ENCODE measurements at regions of chr17 and their contacts with region 1.

Region 1: GRCh38 chr17:18033442-18034099 is 5.4 kb downstream of the ATPAF2 start:
- DNase-seq: peak; percentile 87
- ATAC-seq: peak; percentile 94
- H3K4me3 ChIP-seq: no peak overlapping the region
- H3K27ac ChIP-seq: no peak overlapping the region
- H3K4me1 ChIP-seq: peaks cover 5% of the 10 kb centered on the region
- H3K27me3 ChIP-seq: no peaks in the 10 kb centered on the region
- CTCF ChIP-seq: peak; percentile 91
- POLR2A ChIP-seq: no peak
- RAD21 ChIP-seq: peak; percentile 96

Region 2: GRCh38 chr17:17812211-17813057 is 221.1 kb before region 1 on chr17:
- CTCF ChIA-PET with region 1: no interaction called
- POLR2A ChIA-PET with region 1: no interaction called
- dilution Hi-C with region 1: no loop called
- in situ Hi-C with region 1: no loop called
- intact Hi-C with region 1: loop called (anchors 1 kb)
- DNase-seq: peak; percentile 41
- ATAC-seq: peak; percentile 67
- H3K4me3 ChIP-seq: no peak overlapping the region
- H3K27ac ChIP-seq: no peak overlapping the region
- H3K4me1 ChIP-seq: peaks cover 9% of the 10 kb centered on the region; the same call in 1 of the 2 replicates
- H3K27me3 ChIP-seq: no peaks in the 10 kb centered on the region
- CTCF ChIP-seq: peak; percentile 89
- POLR2A ChIP-seq: no peak
- RAD21 ChIP-seq: peak; percentile 77

Region 3: GRCh38 chr17:17877529-17878358 is 155.8 kb before region 1 on chr17:
- CTCF ChIA-PET with region 1: interaction called, 5 read pairs
- POLR2A ChIA-PET with region 1: no interaction called
- dilution Hi-C with region 1: no loop called
- in situ Hi-C with region 1: no loop called
- intact Hi-C with region 1: loop called (anchors 5 kb)
- DNase-seq: peak; percentile 90
- ATAC-seq: peak; percentile 84
- H3K4me3 ChIP-seq: no peak overlapping the region
- H3K27ac ChIP-seq: peak overlapping the region; percentile 38
- H3K4me1 ChIP-seq: peaks cover 22% of the 10 kb centered on the region
- H3K27me3 ChIP-seq: no peaks in the 10 kb centered on the region
- CTCF ChIP-seq: 0 out of 2 replicates have a peak, but pooled peaks have one; percentile 20
- POLR2A ChIP-seq: no peak
- RAD21 ChIP-seq: 0 out of 2 replicates have a peak, but pooled peaks have one; percentile 20

Region 4: GRCh38 chr17:17890773-17891759 is 142.5 kb before region 1 on chr17:
- CTCF ChIA-PET with region 1: interaction called, 3 read pairs
- POLR2A ChIA-PET with region 1: no interaction called
- dilution Hi-C with region 1: no loop called
- in situ Hi-C with region 1: loop called (anchors 5 kb)
- intact Hi-C with region 1: loop called (anchors 1 kb)
- DNase-seq: peak; percentile 72
- ATAC-seq: peak; percentile 95
- H3K4me3 ChIP-seq: no peak overlapping the region
- H3K27ac ChIP-seq: no peak overlapping the region
- H3K4me1 ChIP-seq: peaks cover 4% of the 10 kb centered on the region; the same call in 1 of the 2 replicates
- H3K27me3 ChIP-seq: no peaks in the 10 kb centered on the region
- CTCF ChIP-seq: peak; percentile 83
- POLR2A ChIP-seq: no peak
- RAD21 ChIP-seq: peak; percentile 94

Region 5: GRCh38 chr17:17919169-17920107 is 114.1 kb before region 1 on chr17:
- CTCF ChIA-PET with region 1: interaction called, 3 read pairs
- POLR2A ChIA-PET with region 1: no interaction called
- dilution Hi-C with region 1: no loop called
- in situ Hi-C with region 1: no loop called
- intact Hi-C with region 1: loop called (anchors 1 kb)
- DNase-seq: peak; percentile 72
- ATAC-seq: peak; percentile 65
- H3K4me3 ChIP-seq: no peak overlapping the region
- H3K27ac ChIP-seq: peak overlapping the region; percentile 25; the same call in 1 of the 2 replicates
- H3K4me1 ChIP-seq: peaks cover 27% of the 10 kb centered on the region
- H3K27me3 ChIP-seq: no peaks in the 10 kb centered on the region
- CTCF ChIP-seq: peak; percentile 85
- POLR2A ChIP-seq: no peak
- RAD21 ChIP-seq: peak; percentile 92

Region 6: GRCh38 chr17:17972126-17972951 is 61.2 kb before region 1 on chr17 and contains the starts of genes DRC3 and TOM1L2:
- CTCF ChIA-PET with region 1: interaction called, 3 read pairs
- POLR2A ChIA-PET with region 1: no interaction called
- dilution Hi-C with region 1: no loop called
- in situ Hi-C with region 1: no loop called
- intact Hi-C with region 1: loop called (anchors 5 kb)
- DNase-seq: peak; percentile 100
- ATAC-seq: peak; percentile 96
- H3K4me3 ChIP-seq: peak within 1 kb of the TSS; percentile 66
- H3K27ac ChIP-seq: peak within 1 kb of the TSS; percentile 36
- H3K4me1 ChIP-seq: peaks cover 9% of the 10 kb centered on the region
- H3K27me3 ChIP-seq: no peaks in the 10 kb centered on the region
- CTCF ChIP-seq: no peak
- POLR2A ChIP-seq: peak; percentile 82
- RAD21 ChIP-seq: peak; percentile 18; the same call in 1 of the 2 replicates
- total RNA-seq, gene DRC3: 0.28 and 0.72 TPM in 2 replicates
- total RNA-seq, gene TOM1L2: 23.3 and 34.4 TPM in 2 replicates

Region 7: GRCh38 chr17:18235743-18236256 is 202.2 kb after region 1 on chr17:
- CTCF ChIA-PET with region 1: no interaction called
- POLR2A ChIA-PET with region 1: no interaction called
- dilution Hi-C with region 1: no loop called
- in situ Hi-C with region 1: no loop called
- intact Hi-C with region 1: no loop called
- DNase-seq: peak; percentile 67
- ATAC-seq: peak; percentile 62
- H3K4me3 ChIP-seq: no peak overlapping the region
- H3K27ac ChIP-seq: peak overlapping the region; percentile 24; the same call in 1 of the 2 replicates
- H3K4me1 ChIP-seq: peaks cover 5% of the 10 kb centered on the region
- H3K27me3 ChIP-seq: no peaks in the 10 kb centered on the region
- CTCF ChIP-seq: no peak
- POLR2A ChIP-seq: no peak; the same call in 1 of the 2 replicates
- RAD21 ChIP-seq: no peak